RWPE1 (cell line): ENCODE measurements at regions of chr10 and their contacts with region 1.

Region 1: DNA sequence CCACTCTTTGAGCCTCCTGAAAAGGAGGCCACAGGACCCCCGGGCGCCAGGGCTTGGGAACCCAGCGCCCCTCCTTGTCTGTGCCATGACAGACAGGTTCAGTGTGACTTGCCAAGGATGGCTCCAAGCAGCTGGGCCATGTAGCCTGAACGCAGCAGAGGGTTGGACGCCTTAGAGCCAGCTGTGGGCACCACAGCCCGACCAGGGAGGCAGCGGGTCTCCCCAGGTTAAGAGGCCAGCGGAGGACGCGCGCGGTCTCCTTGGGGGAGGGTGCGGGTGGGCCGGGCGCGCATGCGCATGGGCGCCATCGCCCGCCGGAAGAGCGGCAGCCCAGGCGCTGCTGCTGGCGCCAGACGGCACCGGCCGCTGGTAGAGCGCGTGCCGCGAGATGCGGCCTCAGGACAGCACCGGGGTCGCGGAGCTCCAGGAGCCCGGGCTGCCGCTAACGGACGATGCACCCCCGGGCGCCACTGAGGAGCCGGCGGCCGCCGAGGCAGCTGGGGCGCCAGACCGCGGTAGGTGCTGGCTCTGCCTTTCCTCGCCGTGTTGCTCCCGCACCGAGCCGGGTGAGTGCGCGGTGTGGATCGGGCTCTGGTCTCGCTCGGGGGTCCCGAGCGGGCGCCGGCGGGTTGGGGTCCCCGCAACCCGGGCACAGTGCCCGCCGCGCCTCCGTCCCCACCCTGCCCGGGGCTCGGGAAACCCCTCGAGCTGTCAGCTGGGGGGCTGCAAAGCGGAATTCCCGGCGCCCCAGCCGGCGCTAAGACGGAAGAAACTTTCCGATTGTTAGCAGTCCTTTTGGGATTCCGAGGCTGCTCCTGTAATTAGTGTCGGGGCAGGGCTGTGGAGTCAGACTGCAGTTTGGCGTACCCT is at the start of gene SLC35G1:
- DNase-seq: peak; percentile 89
- H3K27ac ChIP-seq: peak within 1 kb of the TSS; percentile 30
- CTCF ChIP-seq: no peak

Region 2: GRCh38 chr10:93879273-93879672 is 14.6 kb before region 1 on chr10:
- CTCF ChIA-PET with region 1: no interaction called
- POLR2A ChIA-PET with region 1: no interaction called
- DNase-seq: no peak
- H3K27ac ChIP-seq: no peak overlapping the region
- CTCF ChIP-seq: no peak

Region 3: GRCh38 chr10:93947055-93947454 is 53.2 kb after region 1 on chr10:
- CTCF ChIA-PET with region 1: no interaction called
- POLR2A ChIA-PET with region 1: no interaction called
- DNase-seq: no peak
- H3K27ac ChIP-seq: no peak overlapping the region
- CTCF ChIP-seq: no peak

Region 4: GRCh38 chr10:94027196-94027595 is 133.3 kb after region 1 on chr10:
- CTCF ChIA-PET with region 1: no interaction called
- POLR2A ChIA-PET with region 1: no interaction called
- DNase-seq: no peak
- H3K27ac ChIP-seq: no peak overlapping the region
- CTCF ChIP-seq: no peak

Region 5: DNA sequence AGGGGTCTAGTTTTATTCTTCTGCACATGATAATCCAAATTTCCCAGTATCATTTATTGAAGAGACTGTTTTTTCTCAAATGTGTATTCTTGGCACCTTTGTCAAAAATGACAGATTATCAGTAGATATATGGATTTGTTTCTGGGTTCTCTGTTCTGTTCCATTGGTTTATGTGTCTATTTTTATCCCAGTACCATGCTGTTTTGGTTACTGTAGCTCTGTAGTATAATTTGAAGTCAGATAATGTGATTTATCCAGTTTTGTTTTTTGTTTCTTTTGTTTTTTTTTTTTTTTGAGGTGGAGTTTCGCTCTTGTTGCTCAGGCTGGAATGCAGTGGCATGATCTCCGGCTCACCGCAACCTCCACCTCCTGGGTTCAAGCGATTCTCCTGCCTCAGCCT is 590.1 kb after region 1 on chr10:
- CTCF ChIA-PET with region 1: interaction called, 10 read pairs
- POLR2A ChIA-PET with region 1: no interaction called
- DNase-seq: no peak
- H3K27ac ChIP-seq: no peak overlapping the region
- CTCF ChIP-seq: no peak